ENCODE measurements at regions of chr2 and their contacts with region 1.

Region 1: GRCh38 chr2:206800506-206801417 is 35.4 kb downstream of the FASTKD2 start:
- DNase-seq: peak; percentile 65 to 73
- H3K4me3 ChIP-seq: no peak overlapping the region
- H3K27ac ChIP-seq: no peak overlapping the region
- H3K4me1 ChIP-seq: peaks cover 0 to 7% of the 10 kb centered on the region in 2 donors
- H3K27me3 ChIP-seq: no peaks in the 10 kb centered on the region
- CTCF ChIP-seq: peak in 5 of 6 experiments; percentile 47 to 87 (median 68)
- POLR2A ChIP-seq: no peak

Region 2: GRCh38 chr2:206981739-206982340 is 181.1 kb after region 1 on chr2:
- intact Hi-C with region 1: loop called (anchors 10 kb)
- DNase-seq: peak; percentile 60 to 64
- H3K4me3 ChIP-seq: no peak overlapping the region
- H3K27ac ChIP-seq: no peak overlapping the region
- H3K4me1 ChIP-seq: peaks cover 0 to 13% of the 10 kb centered on the region in 2 donors
- H3K27me3 ChIP-seq: no peaks in the 10 kb centered on the region
- CTCF ChIP-seq: peak; percentile 9 to 65 (median 60)
- POLR2A ChIP-seq: no peak